MCF 10A (cell line): ENCODE measurements at regions of chr20 and their contacts with region 1.

Region 1: DNA sequence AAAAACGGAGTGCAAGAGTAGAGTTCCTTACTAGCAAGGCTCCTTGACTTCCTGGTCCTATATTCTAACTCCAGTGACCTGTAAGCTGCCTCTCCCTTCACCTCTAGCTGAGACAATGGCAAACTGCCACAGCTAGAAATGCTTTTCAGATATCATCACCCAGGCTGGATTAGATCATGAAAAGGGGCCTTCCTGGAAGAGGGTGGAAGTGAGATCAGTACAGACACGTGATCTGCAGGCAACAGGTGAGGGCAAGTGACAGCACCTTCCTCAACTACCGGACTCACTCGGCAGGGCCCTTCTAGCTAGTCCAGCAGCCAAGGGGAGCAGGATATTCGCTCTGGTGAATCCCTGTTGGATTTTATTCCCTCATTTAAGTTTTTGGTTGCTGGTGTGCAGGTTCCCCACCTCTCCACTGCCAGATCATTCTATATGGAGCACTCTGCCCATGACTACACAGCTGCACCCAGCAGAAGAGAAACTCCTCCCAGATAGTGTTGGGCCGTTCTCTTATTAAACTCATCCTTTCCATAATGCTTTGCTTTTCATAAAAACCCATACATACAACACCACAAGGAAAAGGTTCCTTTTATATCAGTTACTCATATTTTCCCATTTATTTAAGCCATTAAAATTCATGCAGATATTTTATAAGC is 26.4 kb upstream of the FAM83C start:
- DNase-seq: peak; percentile 94
- H3K4me3 Mint-ChIP-seq: peak overlapping the region; percentile 16
- H3K27ac Mint-ChIP-seq: peak overlapping the region; percentile 87
- H3K4me1 Mint-ChIP-seq: peaks cover 48% of the 10 kb centered on the region
- H3K27me3 Mint-ChIP-seq: no peaks in the 10 kb centered on the region
- CTCF ChIP-seq: no peak

Region 2: DNA sequence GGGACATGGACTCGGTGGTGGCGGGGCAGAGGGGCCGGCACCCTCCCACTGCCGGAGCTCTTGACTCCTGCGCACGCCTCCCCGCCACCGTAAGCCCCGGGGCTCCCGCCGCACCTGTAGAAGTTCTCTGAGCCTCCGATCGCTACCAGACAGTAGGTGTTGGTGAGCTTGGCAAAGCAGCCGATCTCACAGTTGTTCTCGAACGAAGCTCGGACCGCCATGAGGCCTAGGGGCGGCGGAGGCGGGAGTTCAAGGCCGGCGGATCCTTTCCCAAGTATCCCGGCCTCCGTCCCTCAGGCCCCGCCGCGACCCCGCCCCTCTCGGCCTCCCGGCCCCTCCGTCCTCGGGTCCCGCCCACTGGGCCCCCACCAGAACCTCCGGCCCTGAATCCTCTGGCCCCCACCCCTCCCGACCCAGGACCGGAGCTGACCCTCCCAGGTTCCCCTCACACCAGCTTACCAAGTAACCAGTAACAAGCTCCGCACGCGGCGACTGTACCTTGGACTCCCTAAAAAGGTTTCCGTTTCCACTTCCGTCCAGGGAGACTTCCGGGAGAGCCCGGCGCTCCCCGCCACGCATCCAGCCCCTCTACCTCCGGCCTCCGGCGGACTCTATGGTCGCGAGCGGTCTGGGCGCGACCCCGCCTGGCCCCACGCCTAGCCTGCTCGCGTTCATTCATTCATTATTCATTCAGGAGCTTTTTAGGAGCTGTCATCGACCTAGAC is 34.2 kb before region 1 on chr20 and contains the start of gene EIF6:
- CTCF ChIA-PET with region 1: interaction called, 9 read pairs
- POLR2A ChIA-PET with region 1: interaction called, 30 read pairs
- intact Hi-C with region 1: no loop called
- DNase-seq: peak; percentile 86
- H3K4me3 Mint-ChIP-seq: peak within 1 kb of the TSS; percentile 89
- H3K27ac Mint-ChIP-seq: peak within 1 kb of the TSS; percentile 90
- H3K4me1 Mint-ChIP-seq: peaks cover 25% of the 10 kb centered on the region
- H3K27me3 Mint-ChIP-seq: no peaks in the 10 kb centered on the region
- CTCF ChIP-seq: no peak
- total RNA-seq, gene EIF6: 322 and 354 TPM in 2 replicates

Region 3: DNA sequence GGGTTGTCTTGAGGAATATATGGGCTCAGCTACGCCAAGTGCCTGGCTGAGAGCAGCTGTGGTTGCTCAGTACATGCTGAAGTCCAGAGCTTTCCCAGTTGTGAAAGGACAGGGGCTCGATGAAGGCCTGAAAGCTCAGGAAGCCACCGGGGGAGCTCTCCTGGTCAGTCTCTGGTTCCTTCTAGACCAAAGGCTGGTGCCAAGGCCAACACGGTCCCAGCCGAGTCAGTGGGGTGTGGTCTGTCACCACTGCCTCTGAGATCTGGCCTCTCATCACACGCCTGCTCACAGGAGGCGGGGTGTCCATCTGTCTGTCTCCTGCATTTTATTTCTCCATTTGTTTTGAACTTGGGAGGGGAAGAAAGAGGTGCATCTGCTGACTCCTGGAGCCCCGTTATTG is 21.5 kb before region 1 on chr20:
- CTCF ChIA-PET with region 1: interaction called, 163 read pairs
- POLR2A ChIA-PET with region 1: interaction called, 468 read pairs
- intact Hi-C with region 1: no loop called
- DNase-seq: no peak
- H3K4me3 Mint-ChIP-seq: no peak overlapping the region
- H3K27ac Mint-ChIP-seq: no peak overlapping the region
- H3K4me1 Mint-ChIP-seq: peaks cover 13% of the 10 kb centered on the region
- H3K27me3 Mint-ChIP-seq: no peaks in the 10 kb centered on the region
- CTCF ChIP-seq: no peak

Region 4: DNA sequence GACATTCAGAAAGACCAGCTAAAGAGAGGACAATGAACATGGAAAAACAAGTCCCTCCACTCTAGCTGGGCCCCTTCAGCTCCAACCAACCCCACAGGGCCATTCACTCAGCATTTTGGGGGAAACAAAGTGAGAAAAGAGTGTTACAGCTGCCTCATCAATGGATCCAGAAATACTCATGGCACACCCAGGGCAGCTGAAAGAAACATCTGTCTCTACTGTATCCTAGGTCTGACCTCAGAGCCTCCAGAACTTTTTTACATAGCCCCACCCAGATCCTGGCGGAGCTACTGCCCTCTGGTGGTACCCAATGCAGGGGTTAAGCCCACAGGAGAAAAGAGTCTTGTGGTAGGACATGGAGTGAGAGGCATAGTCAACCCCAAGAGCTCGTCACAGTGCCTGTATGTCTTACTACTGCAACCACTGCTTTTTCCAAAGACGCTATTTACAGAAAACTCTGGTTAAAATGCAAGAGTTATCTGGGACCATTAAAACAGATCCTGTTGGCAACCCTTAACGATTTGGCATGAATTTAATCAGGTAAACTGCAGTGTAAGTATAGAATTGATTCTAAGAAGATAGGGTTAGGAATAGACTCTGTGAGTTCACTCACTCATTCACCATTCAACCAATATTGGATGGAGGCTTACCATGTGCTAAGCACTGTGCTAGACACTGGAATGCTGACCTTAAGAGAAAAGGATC is 11.0 kb after region 1 on chr20:
- CTCF ChIA-PET with region 1: interaction called, 45 read pairs
- POLR2A ChIA-PET with region 1: interaction called, 227 read pairs
- intact Hi-C with region 1: no loop called
- DNase-seq: peak; percentile 82
- H3K4me3 Mint-ChIP-seq: no peak overlapping the region
- H3K27ac Mint-ChIP-seq: peak overlapping the region; percentile 58
- H3K4me1 Mint-ChIP-seq: peaks cover 34% of the 10 kb centered on the region
- H3K27me3 Mint-ChIP-seq: no peaks in the 10 kb centered on the region
- CTCF ChIP-seq: peak; percentile 56

Region 5: GRCh38 chr20:35344354-35344837 is 25.8 kb after region 1 on chr20:
- CTCF ChIA-PET with region 1: interaction called, 4 read pairs
- POLR2A ChIA-PET with region 1: interaction called, 15 read pairs
- intact Hi-C with region 1: no loop called
- DNase-seq: peak; percentile 85
- H3K4me3 Mint-ChIP-seq: peak overlapping the region; percentile 41
- H3K27ac Mint-ChIP-seq: peak overlapping the region; percentile 67
- H3K4me1 Mint-ChIP-seq: peaks cover 34% of the 10 kb centered on the region
- H3K27me3 Mint-ChIP-seq: no peaks in the 10 kb centered on the region
- CTCF ChIP-seq: no peak

Region 6: DNA sequence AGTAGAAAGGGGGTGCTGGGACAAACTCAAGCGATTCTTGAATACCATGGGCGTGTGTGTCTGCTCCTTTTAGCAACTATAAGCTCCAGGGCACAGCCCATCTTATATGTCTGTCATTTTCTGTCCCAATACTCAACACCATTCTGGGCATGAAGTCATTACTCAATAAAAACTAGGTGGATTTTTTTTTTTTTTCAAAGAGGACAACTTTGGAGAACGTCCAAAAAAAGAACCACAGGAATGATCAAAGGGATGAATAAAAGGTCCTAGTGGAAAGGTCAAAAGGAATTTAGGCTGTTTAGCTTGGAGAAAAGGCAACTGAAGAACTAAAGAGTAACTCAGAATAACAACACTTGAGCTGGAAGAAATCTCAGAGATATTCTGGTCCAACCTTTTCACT is 68.7 kb after region 1 on chr20:
- CTCF ChIA-PET with region 1: no interaction called
- POLR2A ChIA-PET with region 1: interaction called, 20 read pairs
- intact Hi-C with region 1: no loop called
- DNase-seq: peak; percentile 83
- H3K4me3 Mint-ChIP-seq: no peak overlapping the region
- H3K27ac Mint-ChIP-seq: no peak overlapping the region
- H3K4me1 Mint-ChIP-seq: peaks cover 13% of the 10 kb centered on the region
- H3K27me3 Mint-ChIP-seq: no peaks in the 10 kb centered on the region
- CTCF ChIP-seq: no peak

Region 7: DNA sequence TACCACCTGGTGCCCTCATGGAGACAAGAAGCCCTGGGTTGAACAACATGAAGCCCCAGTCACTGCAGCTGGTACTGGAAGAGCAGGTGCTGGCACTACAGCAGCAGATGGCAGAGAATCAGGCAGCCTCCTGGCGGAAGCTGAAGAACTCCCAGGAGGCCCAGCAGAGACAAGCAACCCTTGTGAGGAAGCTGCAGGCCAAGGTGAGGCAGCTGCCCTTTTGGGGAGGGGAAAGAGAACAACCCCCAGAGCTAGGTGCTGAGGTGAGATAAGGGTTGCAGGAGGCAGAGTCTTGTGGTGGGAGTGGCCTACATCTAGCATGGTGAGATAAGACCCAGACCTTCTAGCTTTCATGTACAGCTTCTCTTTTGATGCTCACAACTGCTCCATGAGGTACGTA is 143.7 kb after region 1 on chr20:
- CTCF ChIA-PET with region 1: no interaction called
- POLR2A ChIA-PET with region 1: no interaction called
- intact Hi-C with region 1: no loop called
- DNase-seq: no peak
- H3K4me3 Mint-ChIP-seq: no peak overlapping the region
- H3K27ac Mint-ChIP-seq: no peak overlapping the region
- H3K4me1 Mint-ChIP-seq: peaks cover 13% of the 10 kb centered on the region
- H3K27me3 Mint-ChIP-seq: no peaks in the 10 kb centered on the region
- CTCF ChIP-seq: no peak

Region 8: GRCh38 chr20:35828434-35828833 is 509.8 kb after region 1 on chr20:
- CTCF ChIA-PET with region 1: no interaction called
- POLR2A ChIA-PET with region 1: no interaction called
- intact Hi-C with region 1: no loop called
- DNase-seq: no peak
- H3K4me3 Mint-ChIP-seq: no peak overlapping the region
- H3K27ac Mint-ChIP-seq: no peak overlapping the region
- H3K4me1 Mint-ChIP-seq: peaks cover 10% of the 10 kb centered on the region
- H3K27me3 Mint-ChIP-seq: no peaks in the 10 kb centered on the region
- CTCF ChIP-seq: no peak

Region 9: DNA sequence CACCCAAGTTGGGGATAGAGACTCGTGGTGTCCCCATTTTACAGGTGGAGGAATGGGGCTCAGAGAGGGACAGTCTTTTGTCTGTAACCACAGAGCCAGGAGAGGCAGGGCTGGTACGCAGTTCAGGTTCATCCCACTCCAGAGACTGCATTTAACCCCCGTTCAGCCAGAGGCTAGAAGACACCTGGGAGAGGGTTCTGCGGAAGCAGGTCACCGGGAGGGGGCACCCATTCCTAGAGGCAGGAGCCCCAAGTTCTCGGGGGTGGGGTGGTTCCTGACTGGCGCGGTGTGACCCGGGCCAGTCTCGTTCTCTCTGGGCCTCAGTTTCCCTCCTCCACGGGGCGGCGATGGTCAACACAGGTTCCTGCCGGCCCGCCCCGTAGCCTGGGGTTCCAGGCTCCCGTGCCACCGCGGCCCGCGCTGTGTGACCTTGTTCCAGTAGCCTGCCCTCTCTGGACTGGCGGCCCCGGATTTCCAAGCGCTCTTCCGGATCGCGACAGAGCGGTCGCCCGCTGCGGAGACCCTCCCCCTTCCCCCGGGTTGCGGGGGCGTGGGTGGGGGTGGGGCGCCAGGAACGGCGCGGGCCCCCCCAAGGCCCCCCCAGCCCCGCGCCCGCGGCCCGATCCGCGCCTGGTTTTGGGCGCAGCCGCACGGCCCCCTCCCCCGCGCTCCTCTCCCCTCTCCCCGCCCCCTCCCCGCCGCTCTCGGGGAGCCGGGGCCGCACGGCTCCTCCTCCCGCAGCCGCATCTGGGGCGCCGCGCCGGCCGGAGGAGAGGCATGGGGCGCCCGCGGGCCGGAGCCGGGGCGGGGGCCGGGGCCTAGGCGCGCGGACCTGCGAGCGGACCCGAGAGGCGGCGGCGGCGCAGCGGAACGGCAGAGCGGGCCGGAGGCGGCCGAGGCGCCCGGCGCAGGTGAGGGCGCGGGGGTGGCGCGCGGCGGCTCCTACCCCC is 987.2 kb after region 1 on chr20 and contains the start of gene DLGAP4:
- CTCF ChIA-PET with region 1: no interaction called
- POLR2A ChIA-PET with region 1: no interaction called
- intact Hi-C with region 1: no loop called
- DNase-seq: no peak
- H3K4me3 Mint-ChIP-seq: no peak within 1 kb of the TSS
- H3K27ac Mint-ChIP-seq: no peak within 1 kb of the TSS
- H3K4me1 Mint-ChIP-seq: no peaks in the 10 kb centered on the region
- H3K27me3 Mint-ChIP-seq: peaks cover 85% of the 10 kb centered on the region
- CTCF ChIP-seq: no peak
- total RNA-seq, gene DLGAP4: 80.3 and 87.6 TPM in 2 replicates